PC-9 (cell line): ENCODE measurements at regions of chr4 and their contacts with region 1.

Region 1: GRCh38 chr4:80365928-80366327 is 30.4 kb downstream of the CFAP299 start:
- DNase-seq: peak; percentile 57 to 60
- H3K4me3 ChIP-seq: no peak overlapping the region
- H3K27ac ChIP-seq: no peak overlapping the region
- H3K4me1 ChIP-seq: no peaks in the 10 kb centered on the region
- H3K27me3 ChIP-seq: no peaks in the 10 kb centered on the region
- CTCF ChIP-seq: peak; percentile 72

Region 2: GRCh38 chr4:80454040-80454439 is 88.1 kb after region 1 on chr4:
- CTCF ChIA-PET with region 1: no interaction called
- POLR2A ChIA-PET with region 1: no interaction called
- intact Hi-C with region 1: loop called (anchors 1 kb)
- DNase-seq: peak; percentile 24 to 88
- H3K4me3 ChIP-seq: peak overlapping the region; percentile 30; the same call in 1 of the 2 replicates
- H3K27ac ChIP-seq: peak overlapping the region; percentile 98
- H3K4me1 ChIP-seq: peaks cover 22% of the 10 kb centered on the region
- H3K27me3 ChIP-seq: no peaks in the 10 kb centered on the region
- CTCF ChIP-seq: no peak

Region 3: DNA sequence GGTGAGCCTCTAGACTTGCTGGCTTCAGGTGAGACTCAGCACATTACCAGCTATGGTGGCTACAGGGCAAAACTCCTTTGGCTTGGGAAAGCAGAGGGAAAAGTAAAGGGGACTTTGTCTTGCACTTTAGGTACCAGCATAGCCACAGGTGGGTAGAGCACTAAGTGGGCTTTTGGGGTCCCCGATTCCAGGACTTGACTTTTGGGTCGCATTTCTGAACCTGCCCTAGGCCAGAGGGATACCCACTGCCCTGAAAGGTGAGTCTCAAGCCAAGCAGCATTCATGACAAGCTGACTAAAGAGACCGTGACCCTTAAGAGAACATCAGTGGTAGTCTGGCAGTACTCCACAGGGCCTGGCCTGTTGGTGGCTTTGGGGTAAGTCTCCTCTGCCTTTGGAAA is 194.4 kb after region 1 on chr4:
- CTCF ChIA-PET with region 1: no interaction called
- POLR2A ChIA-PET with region 1: no interaction called
- intact Hi-C with region 1: no loop called
- DNase-seq: no peak
- H3K4me3 ChIP-seq: no peak overlapping the region
- H3K27ac ChIP-seq: no peak overlapping the region
- H3K4me1 ChIP-seq: no peaks in the 10 kb centered on the region
- H3K27me3 ChIP-seq: no peaks in the 10 kb centered on the region
- CTCF ChIP-seq: no peak

Region 4: DNA sequence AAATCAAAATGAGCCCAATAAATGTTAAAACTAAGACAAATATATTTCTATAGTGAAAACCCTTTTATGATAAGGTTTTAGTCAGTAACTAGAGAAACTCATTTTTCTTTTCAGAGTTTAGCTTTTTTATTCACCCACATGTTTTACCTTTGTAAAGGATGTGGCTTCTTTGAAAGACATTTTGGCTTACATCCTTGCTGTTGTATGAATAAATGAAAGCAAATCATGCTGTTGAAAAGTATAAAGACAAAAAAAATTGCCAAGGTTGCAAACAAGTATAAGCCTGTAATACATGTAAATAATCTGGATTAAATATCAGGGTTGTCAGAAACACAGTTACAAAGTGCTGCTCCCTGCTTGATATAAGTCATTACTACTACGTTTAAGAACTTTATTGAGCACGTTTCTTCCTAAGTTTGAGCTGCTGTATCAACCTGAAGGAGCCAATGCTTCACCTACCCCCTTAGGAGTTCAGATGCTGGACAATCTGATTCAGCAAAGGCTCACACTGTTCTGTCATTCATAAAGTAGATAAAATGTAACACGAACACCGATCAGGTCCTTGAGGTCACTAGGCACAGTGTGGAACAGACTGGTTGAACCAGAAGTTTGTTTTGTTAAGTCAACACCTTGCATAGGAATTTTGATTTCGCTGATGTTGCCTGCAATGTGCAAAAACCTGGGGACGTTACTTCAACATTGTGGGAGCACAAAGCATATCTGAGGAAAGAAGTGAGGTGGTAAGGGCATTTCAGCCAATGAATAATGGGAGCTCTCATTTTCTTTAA is 343.3 kb after region 1 on chr4:
- CTCF ChIA-PET with region 1: no interaction called
- POLR2A ChIA-PET with region 1: no interaction called
- intact Hi-C with region 1: loop called (anchors 10 kb)
- DNase-seq: peak; percentile 34 to 89
- H3K4me3 ChIP-seq: 0 out of 2 replicates have a peak overlapping the region, but pooled peaks have one; percentile 18
- H3K27ac ChIP-seq: peak overlapping the region; percentile 73
- H3K4me1 ChIP-seq: peaks cover 30% of the 10 kb centered on the region
- H3K27me3 ChIP-seq: no peaks in the 10 kb centered on the region
- CTCF ChIP-seq: no peak

Region 5: GRCh38 chr4:80913381-80913780 is 547.5 kb after region 1 on chr4:
- CTCF ChIA-PET with region 1: no interaction called
- POLR2A ChIA-PET with region 1: no interaction called
- intact Hi-C with region 1: no loop called
- DNase-seq: no peak
- H3K4me3 ChIP-seq: no peak overlapping the region
- H3K27ac ChIP-seq: no peak overlapping the region
- H3K4me1 ChIP-seq: peaks cover 11% of the 10 kb centered on the region
- H3K27me3 ChIP-seq: no peaks in the 10 kb centered on the region
- CTCF ChIP-seq: no peak

Region 6: GRCh38 chr4:81040012-81040659 is 674.2 kb after region 1 on chr4:
- CTCF ChIA-PET with region 1: interaction called, 10 read pairs
- POLR2A ChIA-PET with region 1: no interaction called
- intact Hi-C with region 1: loop called (anchors 1 kb)
- DNase-seq: no peak
- H3K4me3 ChIP-seq: no peak overlapping the region
- H3K27ac ChIP-seq: no peak overlapping the region
- H3K4me1 ChIP-seq: peaks cover 17% of the 10 kb centered on the region
- H3K27me3 ChIP-seq: no peaks in the 10 kb centered on the region
- CTCF ChIP-seq: peak; percentile 73

Region 7: DNA sequence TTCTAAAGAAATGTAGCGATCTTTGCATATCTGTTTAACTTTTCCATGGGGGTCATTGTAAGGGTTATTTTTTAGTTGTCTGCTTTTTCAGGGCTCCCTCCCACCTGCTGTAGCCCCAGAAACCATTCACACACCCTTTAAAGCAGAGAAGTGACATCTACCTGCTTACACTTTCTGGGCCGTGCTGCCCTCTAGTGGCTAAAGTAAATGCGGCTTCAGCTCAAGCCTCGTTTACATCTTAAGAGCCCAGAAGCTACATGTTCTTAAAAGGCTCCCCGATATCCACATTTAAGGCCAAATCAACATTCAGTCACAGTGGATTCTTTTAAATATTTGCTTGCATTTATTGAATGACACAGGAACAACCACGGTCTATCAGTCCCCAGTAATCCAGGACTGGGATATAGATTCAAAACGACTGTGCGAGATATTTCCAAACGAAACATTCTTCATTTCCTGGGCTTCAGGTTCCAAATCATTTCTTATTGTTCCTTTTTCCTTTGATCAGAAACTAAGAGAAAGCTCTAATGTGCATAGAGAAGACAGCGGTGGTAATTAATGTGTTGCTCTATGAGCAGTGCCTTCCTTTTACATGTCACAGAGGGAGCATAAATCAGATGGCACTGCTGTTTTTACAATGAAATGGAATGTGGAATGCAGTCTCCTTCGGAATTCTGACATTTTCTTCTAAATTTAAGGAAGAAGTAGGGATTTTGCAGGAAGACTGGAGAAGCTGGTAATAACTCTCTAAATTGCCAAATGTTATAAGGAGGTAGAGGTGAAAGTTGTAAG is 985.9 kb after region 1 on chr4:
- CTCF ChIA-PET with region 1: interaction called, 5 read pairs
- POLR2A ChIA-PET with region 1: no interaction called
- intact Hi-C with region 1: loop called (anchors 2 kb)
- DNase-seq: peak in 1 of 2 experiments; percentile 43
- H3K4me3 ChIP-seq: no peak overlapping the region
- H3K27ac ChIP-seq: no peak overlapping the region
- H3K4me1 ChIP-seq: no peaks in the 10 kb centered on the region
- H3K27me3 ChIP-seq: no peaks in the 10 kb centered on the region
- CTCF ChIP-seq: peak; percentile 84